ENCODE measurements at regions of chr16 and their contacts with region 1.

Region 1: GRCh38 chr16:17633104-17633951 is 162.6 kb upstream of the XYLT1 start:
- ATAC-seq: peak in 2 of 8 experiments; percentile 86 to 88
- H3K4me3 ChIP-seq: no peak overlapping the region
- H3K27ac ChIP-seq: no peak overlapping the region
- H3K4me1 ChIP-seq: peaks cover 4 to 7% of the 10 kb centered on the region in 2 donors

Region 2: GRCh38 chr16:17529982-17530765 is 103.2 kb before region 1 on chr16:
- in situ Hi-C with region 1: loop called in 1 of 9 experiments (anchors 25 kb)
- ATAC-seq: no peak
- H3K4me3 ChIP-seq: no peak overlapping the region
- H3K27ac ChIP-seq: no peak overlapping the region
- H3K4me1 ChIP-seq: no peaks in the 10 kb centered on the region

Region 3: GRCh38 chr16:17683281-17683680 is 50.0 kb after region 1 on chr16:
- in situ Hi-C with region 1: loop called in 1 of 9 experiments (anchors 10 kb)
- ATAC-seq: no peak
- H3K4me3 ChIP-seq: no peak overlapping the region
- H3K27ac ChIP-seq: no peak overlapping the region
- H3K4me1 ChIP-seq: peaks cover 0 to 9% of the 10 kb centered on the region in 2 donors